Endothelial cell of umbilical vein (primary cell): ENCODE measurements at regions of chr19 and their contacts with region 1.

Region 1: DNA sequence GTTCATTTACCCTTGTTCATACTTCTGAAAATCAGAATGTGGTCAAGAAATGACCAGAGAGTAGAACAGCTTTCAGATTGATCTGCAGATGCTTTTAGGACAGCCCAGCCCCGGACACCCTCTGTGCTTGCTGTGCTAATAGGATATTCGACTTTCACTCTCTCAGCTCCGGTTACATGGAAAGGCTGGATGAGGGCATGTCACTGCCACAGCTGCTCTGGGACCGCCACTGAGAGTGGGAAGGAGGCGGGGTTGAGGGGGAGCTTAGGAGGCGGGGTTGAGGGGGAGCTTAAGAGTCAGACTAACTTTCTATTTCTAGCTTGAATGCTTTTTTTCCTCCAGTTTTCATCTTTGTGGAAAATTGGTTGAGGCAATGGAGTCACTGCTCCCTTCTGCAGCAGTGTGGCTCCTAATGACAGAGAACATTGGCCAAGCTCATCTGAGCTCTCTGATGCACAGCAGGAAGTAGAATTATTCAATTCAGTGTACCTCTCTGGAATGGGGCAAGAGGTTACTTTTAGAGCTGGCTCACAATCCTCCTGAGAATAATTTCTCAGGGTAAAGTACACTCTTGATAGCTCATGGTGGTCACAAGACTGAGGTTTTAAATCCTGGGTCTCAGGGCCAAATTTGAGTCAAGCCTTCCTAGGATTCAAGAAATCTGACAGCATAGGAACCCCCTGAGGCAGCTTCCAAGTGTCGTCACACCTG is 74.6 kb upstream of the NPAS1 start:
- DNase-seq: peak; percentile 54
- H3K4me3 ChIP-seq: no peak overlapping the region
- H3K27ac ChIP-seq: no peak overlapping the region
- H3K4me1 ChIP-seq: peaks cover 2% of the 10 kb centered on the region
- H3K27me3 ChIP-seq: no peaks in the 10 kb centered on the region
- CTCF ChIP-seq: no peak
- POLR2A ChIP-seq: no peak

Region 2: DNA sequence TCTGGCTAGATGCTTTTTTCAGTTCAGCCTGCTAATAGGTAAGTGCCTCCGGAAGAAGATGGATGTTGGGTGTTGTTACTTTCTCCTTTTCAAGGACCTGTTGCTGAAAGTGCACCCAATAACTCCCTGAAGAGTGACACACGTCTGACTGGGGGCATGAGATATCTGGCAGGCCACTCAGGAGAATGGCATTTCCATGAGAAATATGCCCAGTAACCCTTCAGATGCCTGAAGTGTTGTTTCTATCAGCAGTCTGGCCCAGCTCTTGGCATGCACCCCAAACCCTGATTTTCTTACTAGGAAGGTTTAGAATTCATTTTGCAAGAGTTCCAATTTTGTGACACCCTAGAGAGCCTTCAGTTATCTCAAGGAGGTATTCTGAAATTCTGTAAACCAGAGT is 12.7 kb before region 1 on chr19:
- CTCF ChIA-PET with region 1: interaction called, 10 read pairs
- POLR2A ChIA-PET with region 1: no interaction called
- dilution Hi-C with region 1: no loop called
- intact Hi-C with region 1: no loop called
- DNase-seq: peak; percentile 70
- H3K4me3 ChIP-seq: no peak overlapping the region
- H3K27ac ChIP-seq: peak overlapping the region; percentile 40
- H3K4me1 ChIP-seq: peaks cover 45% of the 10 kb centered on the region
- H3K27me3 ChIP-seq: no peaks in the 10 kb centered on the region
- CTCF ChIP-seq: no peak
- POLR2A ChIP-seq: no peak

Region 3: DNA sequence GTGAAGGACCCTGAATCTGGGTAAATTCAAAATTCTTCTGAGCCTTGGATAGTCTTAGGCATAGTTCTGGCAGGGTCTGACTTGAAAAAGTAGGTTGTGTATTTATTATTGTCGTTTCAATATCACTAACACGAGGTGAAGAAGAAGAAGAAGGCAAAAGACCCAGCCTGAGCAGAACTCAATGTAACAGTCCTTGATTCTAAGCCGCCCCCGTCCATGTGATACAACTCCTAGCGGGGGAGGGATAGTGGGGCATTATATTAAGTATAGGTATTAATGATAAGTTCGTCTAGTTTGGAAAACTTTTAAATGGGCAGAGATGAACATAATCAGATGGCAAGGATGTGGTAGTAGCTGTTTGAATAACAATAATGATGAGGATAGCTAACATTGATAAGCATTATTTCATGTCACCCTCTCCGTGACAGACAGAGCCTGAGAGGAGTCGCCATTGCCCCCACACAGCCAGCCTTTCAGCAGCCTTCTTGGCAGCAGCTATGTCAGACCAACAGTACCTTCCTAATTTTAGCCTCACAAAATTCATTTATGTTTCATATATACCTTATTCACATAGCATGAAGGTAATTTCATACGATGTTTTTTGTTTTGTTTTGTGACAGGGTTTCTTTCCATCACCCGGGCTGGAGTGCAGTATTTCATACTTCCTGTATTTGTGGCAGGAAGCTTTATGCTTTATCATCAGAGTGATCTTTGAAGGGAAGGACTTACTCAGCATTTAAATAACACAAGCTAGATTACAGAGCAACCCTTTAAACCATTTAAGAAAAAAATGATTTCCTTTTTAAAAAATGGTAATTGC is 10.1 kb after region 1 on chr19:
- CTCF ChIA-PET with region 1: interaction called, 14 read pairs
- POLR2A ChIA-PET with region 1: no interaction called
- dilution Hi-C with region 1: no loop called
- intact Hi-C with region 1: no loop called
- DNase-seq: peak; percentile 75
- H3K4me3 ChIP-seq: peak overlapping the region in 2 of 3 experiments; percentile 8 to 54
- H3K27ac ChIP-seq: peak overlapping the region; percentile 73
- H3K4me1 ChIP-seq: peaks cover 20% of the 10 kb centered on the region
- H3K27me3 ChIP-seq: no peaks in the 10 kb centered on the region
- CTCF ChIP-seq: no peak
- POLR2A ChIP-seq: no peak